T-cell (primary cell): ENCODE measurements at regions of chr17 and their contacts with region 1.

Region 1: DNA sequence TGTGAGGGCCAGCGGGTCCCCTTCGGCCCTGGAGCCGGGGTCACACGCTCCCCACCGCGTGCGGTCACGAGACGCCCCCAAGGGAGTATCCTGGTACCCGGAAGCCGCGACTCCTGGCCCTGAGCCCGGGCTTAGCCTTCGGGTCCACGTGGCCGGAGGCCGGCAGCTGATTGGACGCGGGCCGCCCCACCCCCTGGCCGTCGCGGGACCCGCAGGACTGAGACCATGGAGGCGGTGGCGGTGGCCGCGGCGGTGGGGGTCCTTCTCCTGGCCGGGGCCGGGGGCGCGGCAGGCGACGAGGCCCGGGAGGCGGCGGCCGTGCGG is at the start of gene NAGLU:
- DNase-seq: peak; percentile 24 to 83 (median 66)
- ATAC-seq: peak; percentile 84 to 85 (median 84)
- H3K4me3 ChIP-seq: peak within 1 kb of the TSS; percentile 59 to 67
- H3K4me3 Mint-ChIP-seq: peak within 1 kb of the TSS; percentile 79 to 83 (median 81)
- H3K27ac ChIP-seq: peak within 1 kb of the TSS; percentile 70
- H3K27ac Mint-ChIP-seq: peak within 1 kb of the TSS; percentile 75 to 79
- H3K4me1 ChIP-seq: peaks cover 11 to 48% of the 10 kb centered on the region in 2 experiments
- H3K4me1 Mint-ChIP-seq: peaks cover 35 to 45% (median 45%) of the 10 kb centered on the region in 3 donors
- H3K27me3 ChIP-seq: no peaks in the 10 kb centered on the region
- H3K27me3 Mint-ChIP-seq: no peaks in the 10 kb centered on the region
- total RNA-seq, gene NAGLU: 13.2 to 35.1 (median 28.8) TPM

Region 2: GRCh38 chr17:41717408-41718286 is 818.4 kb before region 1 on chr17:
- CTCF ChIA-PET with region 1: no interaction called
- POLR2A ChIA-PET with region 1: no interaction called
- DNase-seq: peak in 4 of 35 experiments; percentile 26 to 42 (median 34)
- ATAC-seq: peak; percentile 83 to 98 (median 92)
- H3K4me3 ChIP-seq: no peak overlapping the region
- H3K4me3 Mint-ChIP-seq: no peak overlapping the region
- H3K27ac ChIP-seq: no peak overlapping the region
- H3K27ac Mint-ChIP-seq: peak overlapping the region; percentile 66 to 78
- H3K4me1 ChIP-seq: peaks cover 0 to 6% of the 10 kb centered on the region in 2 experiments
- H3K4me1 Mint-ChIP-seq: peaks cover 10 to 12% (median 11%) of the 10 kb centered on the region in 3 donors
- H3K27me3 ChIP-seq: peaks cover 0 to 26% of the 10 kb centered on the region in 2 experiments
- H3K27me3 Mint-ChIP-seq: peaks cover 4 to 17% of the 10 kb centered on the region in 2 donors

Region 3: GRCh38 chr17:42944211-42944610 is 408.2 kb after region 1 on chr17:
- CTCF ChIA-PET with region 1: no interaction called
- POLR2A ChIA-PET with region 1: interaction called in 1 of 2 experiments, 13 read pairs
- DNase-seq: no peak
- ATAC-seq: no peak
- H3K4me3 ChIP-seq: no peak overlapping the region
- H3K4me3 Mint-ChIP-seq: no peak overlapping the region
- H3K27ac ChIP-seq: no peak overlapping the region
- H3K27ac Mint-ChIP-seq: no peak overlapping the region
- H3K4me1 ChIP-seq: no peaks in the 10 kb centered on the region
- H3K4me1 Mint-ChIP-seq: no peaks in the 10 kb centered on the region
- H3K27me3 ChIP-seq: peaks cover 0 to 4% of the 10 kb centered on the region in 2 experiments
- H3K27me3 Mint-ChIP-seq: peaks cover 0 to 7% of the 10 kb centered on the region in 2 donors